ENCODE measurements at regions of chr1 and their contacts with region 1.

Region 1: GRCh38 chr1:181166377-181167196 is 78.1 kb downstream of the IER5 start:
- DNase-seq: peak; percentile 35 to 84 (median 78)
- ATAC-seq: peak; percentile 99
- H3K4me3 ChIP-seq: no peak overlapping the region
- H3K4me3 Mint-ChIP-seq: peak overlapping the region; percentile 58 to 85 (median 80)
- H3K27ac ChIP-seq: no peak overlapping the region
- H3K27ac Mint-ChIP-seq: peak overlapping the region in 8 of 9 donors; percentile 43 to 92 (median 76)
- H3K4me1 ChIP-seq: peaks cover 0 to 5% of the 10 kb centered on the region in 2 donors
- H3K4me1 Mint-ChIP-seq: peaks cover 4 to 10% (median 9%) of the 10 kb centered on the region in 7 donors
- H3K27me3 ChIP-seq: no peaks in the 10 kb centered on the region
- H3K27me3 Mint-ChIP-seq: peaks cover 0 to 32% (median 0%) of the 10 kb centered on the region in 5 donors

Region 2: GRCh38 chr1:180515864-180516388 is 650.7 kb before region 1 on chr1:
- CTCF ChIA-PET with region 1: interaction called, 6 read pairs
- POLR2A ChIA-PET with region 1: no interaction called
- intact Hi-C with region 1: loop called (anchors 1 to 5 kb)
- DNase-seq: peak in 8 of 9 donors; percentile 33 to 65 (median 53)
- ATAC-seq: peak; percentile 94
- H3K4me3 ChIP-seq: no peak overlapping the region
- H3K4me3 Mint-ChIP-seq: no peak overlapping the region
- H3K27ac ChIP-seq: no peak overlapping the region
- H3K27ac Mint-ChIP-seq: no peak overlapping the region
- H3K4me1 ChIP-seq: no peaks in the 10 kb centered on the region
- H3K4me1 Mint-ChIP-seq: peaks cover 0 to 3% (median 0%) of the 10 kb centered on the region in 7 donors
- H3K27me3 ChIP-seq: no peaks in the 10 kb centered on the region
- H3K27me3 Mint-ChIP-seq: peaks cover 0 to 13% (median 10%) of the 10 kb centered on the region in 5 donors

Region 3: DNA sequence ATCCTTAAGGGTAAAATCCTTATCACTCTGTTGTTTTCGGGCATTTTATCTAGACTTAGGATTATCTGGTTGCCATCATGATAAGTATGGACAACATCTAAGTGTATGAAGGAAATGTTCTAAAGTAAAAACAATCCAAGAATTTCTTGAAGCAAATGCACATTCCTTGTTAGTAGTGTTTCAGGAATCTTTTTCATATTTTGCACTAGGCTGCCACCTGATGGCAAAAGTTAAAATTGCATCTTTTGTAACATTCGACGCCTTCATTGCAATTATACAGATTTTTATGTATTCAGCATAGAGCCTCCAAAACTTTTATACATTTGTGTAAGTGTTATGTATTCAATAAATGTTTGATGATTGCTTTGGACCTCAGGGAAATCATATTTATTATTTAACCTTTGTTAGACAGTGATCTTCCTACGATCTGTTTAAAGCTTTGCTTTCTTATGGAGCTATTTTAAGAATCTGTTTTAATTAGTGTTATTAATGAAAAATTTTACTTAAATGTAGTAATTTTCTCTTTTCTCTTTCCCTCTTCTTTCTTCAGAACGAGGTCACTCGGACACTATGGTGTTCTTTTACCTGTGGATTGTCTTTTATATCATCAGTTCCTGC is 303.3 kb before region 1 on chr1:
- CTCF ChIA-PET with region 1: interaction called, 3 read pairs
- POLR2A ChIA-PET with region 1: no interaction called
- intact Hi-C with region 1: loop called in 1 of 2 experiments (anchors 5 kb)
- DNase-seq: peak in 6 of 9 donors; percentile 8 to 51 (median 36)
- ATAC-seq: peak; percentile 36
- H3K4me3 ChIP-seq: no peak overlapping the region
- H3K4me3 Mint-ChIP-seq: no peak overlapping the region
- H3K27ac ChIP-seq: no peak overlapping the region
- H3K27ac Mint-ChIP-seq: no peak overlapping the region
- H3K4me1 ChIP-seq: no peaks in the 10 kb centered on the region
- H3K4me1 Mint-ChIP-seq: no peaks in the 10 kb centered on the region
- H3K27me3 ChIP-seq: no peaks in the 10 kb centered on the region
- H3K27me3 Mint-ChIP-seq: no peaks in the 10 kb centered on the region

Region 4: GRCh38 chr1:180981596-180982387 is 184.8 kb before region 1 on chr1:
- CTCF ChIA-PET with region 1: no interaction called
- POLR2A ChIA-PET with region 1: no interaction called
- intact Hi-C with region 1: loop called in 1 of 2 experiments (anchors 5 kb)
- DNase-seq: peak in 8 of 9 donors; percentile 32 to 62 (median 55)
- ATAC-seq: peak; percentile 85
- H3K4me3 ChIP-seq: no peak overlapping the region
- H3K4me3 Mint-ChIP-seq: peak overlapping the region in 9 of 10 donors; percentile 15 to 79 (median 34)
- H3K27ac ChIP-seq: peak overlapping the region; percentile 34
- H3K27ac Mint-ChIP-seq: peak overlapping the region; percentile 22 to 78 (median 65)
- H3K4me1 ChIP-seq: peaks cover 5 to 11% of the 10 kb centered on the region in 2 donors
- H3K4me1 Mint-ChIP-seq: peaks cover 12 to 45% (median 30%) of the 10 kb centered on the region in 7 donors
- H3K27me3 ChIP-seq: no peaks in the 10 kb centered on the region
- H3K27me3 Mint-ChIP-seq: no peaks in the 10 kb centered on the region

Region 5: DNA sequence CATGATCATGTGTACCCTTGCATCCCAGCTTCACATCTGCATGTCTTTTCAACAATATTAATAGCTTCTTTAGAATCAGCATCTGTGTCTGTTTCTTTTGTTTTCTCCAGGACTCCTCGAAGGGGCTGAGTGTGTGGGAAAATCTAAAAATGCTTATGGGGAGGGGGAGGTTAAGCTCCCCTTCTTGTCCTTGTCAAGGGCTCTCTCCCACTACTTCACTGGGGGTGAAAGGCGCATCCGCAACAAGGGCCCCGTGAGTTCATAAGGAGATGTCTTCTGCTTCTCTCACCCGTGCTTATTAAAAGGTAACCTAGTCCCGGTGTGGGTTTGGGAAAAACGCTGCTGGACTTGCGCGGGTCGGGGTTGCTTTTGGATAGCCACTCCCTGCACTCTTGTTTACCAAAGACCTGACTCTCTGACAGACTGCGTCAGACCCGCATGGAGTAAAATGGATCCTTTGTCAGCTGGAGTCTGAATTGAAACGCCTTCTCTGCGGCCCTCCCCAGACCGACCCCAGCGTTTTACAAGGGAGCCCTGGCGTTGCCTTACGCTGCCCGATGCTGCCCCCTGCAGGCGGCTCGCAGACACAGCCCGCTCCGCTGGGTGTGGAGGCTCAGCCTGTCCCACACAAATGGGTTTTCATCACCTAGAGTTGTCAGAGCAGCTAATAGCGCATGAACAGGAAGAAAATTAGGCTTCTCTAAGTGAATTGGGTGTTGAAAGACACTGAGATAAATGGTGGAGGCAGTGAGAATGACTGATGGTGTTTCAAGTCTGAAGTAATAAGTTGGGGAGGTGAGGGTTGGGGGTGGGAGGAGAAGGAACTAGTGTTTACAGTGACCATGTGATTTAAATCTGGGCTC is 24.3 kb before region 1 on chr1:
- CTCF ChIA-PET with region 1: interaction called, 53 read pairs
- POLR2A ChIA-PET with region 1: interaction called, 84 read pairs
- intact Hi-C with region 1: loop called (anchors 1 kb)
- DNase-seq: peak; percentile 70 to 91 (median 83)
- ATAC-seq: peak; percentile 96
- H3K4me3 ChIP-seq: no peak overlapping the region
- H3K4me3 Mint-ChIP-seq: peak overlapping the region in 4 of 10 donors; percentile 2 to 63 (median 18)
- H3K27ac ChIP-seq: no peak overlapping the region
- H3K27ac Mint-ChIP-seq: peak overlapping the region in 4 of 9 donors; percentile 28 to 81 (median 54)
- H3K4me1 ChIP-seq: peaks cover 7 to 15% of the 10 kb centered on the region in 2 donors
- H3K4me1 Mint-ChIP-seq: peaks cover 18 to 62% (median 34%) of the 10 kb centered on the region in 7 donors
- H3K27me3 ChIP-seq: no peaks in the 10 kb centered on the region
- H3K27me3 Mint-ChIP-seq: peaks cover 0 to 24% (median 0%) of the 10 kb centered on the region in 5 donors

Region 6: DNA sequence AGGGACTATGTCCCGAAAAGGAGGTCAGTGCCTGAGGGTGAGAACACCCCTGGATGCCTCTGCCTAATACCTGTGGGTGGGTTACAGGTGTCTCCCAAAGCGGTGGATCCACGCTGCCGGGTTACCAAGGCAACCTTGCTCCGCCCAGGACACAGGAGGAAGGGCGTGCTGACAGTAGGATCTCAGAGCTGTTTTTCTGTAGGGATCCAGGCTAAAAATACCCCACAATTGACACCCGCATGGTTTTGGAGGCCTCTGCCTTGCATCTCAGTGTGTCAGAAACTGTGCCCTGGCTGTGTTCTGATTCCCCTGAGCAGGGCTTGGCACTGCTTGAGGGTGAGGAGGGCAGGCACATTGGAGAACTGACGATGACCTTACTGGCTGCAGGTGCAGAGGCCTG is 39.9 kb after region 1 on chr1:
- CTCF ChIA-PET with region 1: no interaction called
- POLR2A ChIA-PET with region 1: no interaction called
- intact Hi-C with region 1: no loop called
- DNase-seq: no peak
- ATAC-seq: no peak
- H3K4me3 ChIP-seq: no peak overlapping the region
- H3K4me3 Mint-ChIP-seq: no peak overlapping the region
- H3K27ac ChIP-seq: no peak overlapping the region
- H3K27ac Mint-ChIP-seq: no peak overlapping the region
- H3K4me1 ChIP-seq: no peaks in the 10 kb centered on the region
- H3K4me1 Mint-ChIP-seq: peaks cover 0 to 4% (median 0%) of the 10 kb centered on the region in 7 donors
- H3K27me3 ChIP-seq: no peaks in the 10 kb centered on the region
- H3K27me3 Mint-ChIP-seq: peaks cover 0 to 14% (median 0%) of the 10 kb centered on the region in 5 donors

Region 7: GRCh38 chr1:181356505-181357340 is 190.1 kb after region 1 on chr1:
- CTCF ChIA-PET with region 1: no interaction called
- POLR2A ChIA-PET with region 1: no interaction called
- intact Hi-C with region 1: no loop called
- DNase-seq: no peak
- ATAC-seq: no peak
- H3K4me3 ChIP-seq: no peak overlapping the region
- H3K4me3 Mint-ChIP-seq: no peak overlapping the region
- H3K27ac ChIP-seq: no peak overlapping the region
- H3K27ac Mint-ChIP-seq: peak overlapping the region in 2 of 9 donors; percentile 16 to 56
- H3K4me1 ChIP-seq: no peaks in the 10 kb centered on the region
- H3K4me1 Mint-ChIP-seq: peaks cover 0 to 16% (median 4%) of the 10 kb centered on the region in 7 donors
- H3K27me3 ChIP-seq: no peaks in the 10 kb centered on the region
- H3K27me3 Mint-ChIP-seq: peaks cover 0 to 7% (median 0%) of the 10 kb centered on the region in 5 donors

Region 8: DNA sequence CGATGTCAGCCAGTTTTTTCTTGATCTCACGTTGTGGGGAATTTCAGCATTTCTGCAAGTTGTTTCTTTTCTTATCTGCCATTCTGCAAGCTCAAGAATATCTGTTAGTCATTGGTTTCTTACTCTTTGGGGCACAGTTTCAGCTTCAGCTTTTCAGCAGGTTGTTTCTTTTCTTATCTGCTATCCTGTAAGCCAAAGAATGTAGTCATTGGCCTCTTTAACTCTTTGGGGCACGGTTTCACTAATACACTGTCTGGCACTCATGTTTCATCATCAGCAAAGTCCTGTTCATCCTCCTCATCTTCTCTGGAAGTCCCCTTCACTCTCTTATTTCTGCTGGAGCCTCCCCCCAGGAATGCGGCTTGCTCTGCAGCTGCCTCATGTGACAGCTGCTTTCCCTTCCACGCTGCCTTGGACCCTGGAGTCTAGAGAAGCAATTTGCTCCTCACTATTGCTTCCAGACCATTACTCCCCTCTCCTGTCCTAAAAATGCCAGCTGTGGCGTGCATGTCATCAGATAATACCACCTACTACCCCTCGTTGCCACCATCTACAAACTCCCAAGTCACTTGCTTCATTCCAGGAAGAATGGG is 249.8 kb after region 1 on chr1:
- CTCF ChIA-PET with region 1: no interaction called
- POLR2A ChIA-PET with region 1: no interaction called
- intact Hi-C with region 1: no loop called
- DNase-seq: no peak
- ATAC-seq: no peak
- H3K4me3 ChIP-seq: no peak overlapping the region
- H3K4me3 Mint-ChIP-seq: no peak overlapping the region
- H3K27ac ChIP-seq: no peak overlapping the region
- H3K27ac Mint-ChIP-seq: no peak overlapping the region
- H3K4me1 ChIP-seq: no peaks in the 10 kb centered on the region
- H3K4me1 Mint-ChIP-seq: peaks cover 0 to 3% (median 0%) of the 10 kb centered on the region in 7 donors
- H3K27me3 ChIP-seq: no peaks in the 10 kb centered on the region
- H3K27me3 Mint-ChIP-seq: no peaks in the 10 kb centered on the region

Region 9: DNA sequence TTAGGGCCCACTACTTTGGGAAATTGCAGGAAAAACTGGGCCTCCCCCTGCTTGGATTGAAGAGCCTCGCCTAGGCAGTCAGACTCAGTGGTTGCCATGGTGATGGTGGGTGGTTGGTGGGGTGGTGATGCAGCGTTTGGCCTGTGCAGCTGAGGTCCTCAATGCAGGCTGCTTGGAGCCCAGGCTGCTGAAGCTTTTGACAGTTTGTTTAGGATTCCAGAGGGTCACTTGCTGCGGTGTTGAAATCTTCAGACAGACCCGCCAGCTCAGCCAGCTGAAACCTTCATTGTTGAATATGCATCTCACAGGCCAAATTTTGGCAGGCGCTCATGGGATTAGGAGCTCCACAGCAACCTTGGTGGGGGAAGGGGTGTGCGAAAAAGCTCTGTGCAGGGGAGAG is 384.7 kb after region 1 on chr1:
- CTCF ChIA-PET with region 1: no interaction called
- POLR2A ChIA-PET with region 1: no interaction called
- intact Hi-C with region 1: no loop called
- DNase-seq: no peak
- ATAC-seq: no peak
- H3K4me3 ChIP-seq: no peak overlapping the region
- H3K4me3 Mint-ChIP-seq: no peak overlapping the region
- H3K27ac ChIP-seq: no peak overlapping the region
- H3K27ac Mint-ChIP-seq: no peak overlapping the region
- H3K4me1 ChIP-seq: no peaks in the 10 kb centered on the region
- H3K4me1 Mint-ChIP-seq: peaks cover 0 to 2% (median 0%) of the 10 kb centered on the region in 7 donors
- H3K27me3 ChIP-seq: no peaks in the 10 kb centered on the region
- H3K27me3 Mint-ChIP-seq: peaks cover 2 to 64% (median 43%) of the 10 kb centered on the region in 5 donors